ENCODE measurements at regions of chr12 and their contacts with region 1.

Region 1: DNA sequence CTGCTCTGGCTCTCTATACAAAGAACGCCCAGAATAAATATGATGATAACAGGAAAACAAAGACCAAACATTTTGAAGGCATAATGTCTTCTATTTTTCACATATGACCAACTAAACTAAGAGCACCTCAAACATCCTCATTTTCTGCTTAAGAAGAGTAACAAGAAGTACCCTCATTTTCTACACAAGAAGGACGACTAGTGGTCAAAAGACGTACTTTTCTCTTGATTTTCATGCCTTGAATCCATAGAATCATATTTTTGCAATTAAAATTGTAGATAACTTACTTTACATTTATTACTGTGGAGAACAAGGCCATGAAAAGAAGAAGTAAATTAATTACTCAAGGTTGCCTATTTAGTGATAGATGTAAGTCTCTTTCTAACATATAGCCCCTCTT is 358.6 kb downstream of the DUSP6 start:
- H3K4me3 Mint-ChIP-seq: no peak overlapping the region
- H3K27ac Mint-ChIP-seq: no peak overlapping the region
- H3K4me1 Mint-ChIP-seq: no peaks in the 10 kb centered on the region
- H3K27me3 Mint-ChIP-seq: no peaks in the 10 kb centered on the region

Region 2: DNA sequence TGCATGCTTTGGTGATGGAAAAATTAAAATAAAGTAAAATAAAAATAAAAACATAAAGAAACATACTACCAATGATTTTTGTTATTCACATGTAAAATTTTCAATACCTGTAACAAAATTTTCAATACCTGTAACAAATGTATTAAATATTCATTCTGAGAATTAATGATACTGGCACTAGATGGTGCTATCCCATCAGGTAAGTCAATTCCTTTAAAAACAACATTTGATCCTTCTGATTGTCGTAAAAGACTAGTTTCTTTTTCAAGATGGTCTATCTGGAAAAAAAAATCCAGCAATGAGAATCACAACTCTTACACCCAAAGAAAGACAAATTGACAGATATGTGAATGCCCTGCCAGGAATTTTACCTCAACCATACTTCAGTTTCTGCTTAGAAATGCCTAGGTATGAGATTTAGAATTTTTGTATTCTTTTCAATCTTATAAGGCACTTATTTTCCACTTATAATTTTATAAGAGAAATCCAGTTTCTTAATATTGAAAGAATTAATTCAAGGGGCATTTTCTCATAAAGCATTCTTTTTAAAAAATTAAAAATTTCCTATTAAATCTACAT is 882.5 kb before region 1 on chr12:
- intact Hi-C with region 1: loop called (anchors 2 kb)
- H3K4me3 Mint-ChIP-seq: no peak overlapping the region
- H3K27ac Mint-ChIP-seq: no peak overlapping the region
- H3K4me1 Mint-ChIP-seq: no peaks in the 10 kb centered on the region
- H3K27me3 Mint-ChIP-seq: no peaks in the 10 kb centered on the region

Region 3: GRCh38 chr12:88153959-88154358 is 839.7 kb before region 1 on chr12:
- intact Hi-C with region 1: loop called (anchors 5 kb)
- H3K4me3 Mint-ChIP-seq: no peak overlapping the region
- H3K27ac Mint-ChIP-seq: no peak overlapping the region
- H3K4me1 Mint-ChIP-seq: no peaks in the 10 kb centered on the region
- H3K27me3 Mint-ChIP-seq: no peaks in the 10 kb centered on the region

Region 4: GRCh38 chr12:88633312-88633711 is 360.3 kb before region 1 on chr12:
- intact Hi-C with region 1: loop called (anchors 5 kb)
- H3K4me3 Mint-ChIP-seq: no peak overlapping the region
- H3K27ac Mint-ChIP-seq: no peak overlapping the region
- H3K4me1 Mint-ChIP-seq: peaks cover 1% of the 10 kb centered on the region
- H3K27me3 Mint-ChIP-seq: peaks cover 11% of the 10 kb centered on the region

Region 5: GRCh38 chr12:88977115-88977514 is 16.5 kb before region 1 on chr12:
- intact Hi-C with region 1: no loop called
- H3K4me3 Mint-ChIP-seq: no peak overlapping the region
- H3K27ac Mint-ChIP-seq: no peak overlapping the region
- H3K4me1 Mint-ChIP-seq: no peaks in the 10 kb centered on the region
- H3K27me3 Mint-ChIP-seq: no peaks in the 10 kb centered on the region

Region 6: GRCh38 chr12:89882050-89882449 is 888.4 kb after region 1 on chr12:
- intact Hi-C with region 1: no loop called
- H3K4me3 Mint-ChIP-seq: no peak overlapping the region
- H3K27ac Mint-ChIP-seq: peak overlapping the region; percentile 47
- H3K4me1 Mint-ChIP-seq: peaks cover 31% of the 10 kb centered on the region
- H3K27me3 Mint-ChIP-seq: no peaks in the 10 kb centered on the region